T-cell (primary cell): ENCODE measurements at regions of chr13 and their contacts with region 1.

Region 1: DNA sequence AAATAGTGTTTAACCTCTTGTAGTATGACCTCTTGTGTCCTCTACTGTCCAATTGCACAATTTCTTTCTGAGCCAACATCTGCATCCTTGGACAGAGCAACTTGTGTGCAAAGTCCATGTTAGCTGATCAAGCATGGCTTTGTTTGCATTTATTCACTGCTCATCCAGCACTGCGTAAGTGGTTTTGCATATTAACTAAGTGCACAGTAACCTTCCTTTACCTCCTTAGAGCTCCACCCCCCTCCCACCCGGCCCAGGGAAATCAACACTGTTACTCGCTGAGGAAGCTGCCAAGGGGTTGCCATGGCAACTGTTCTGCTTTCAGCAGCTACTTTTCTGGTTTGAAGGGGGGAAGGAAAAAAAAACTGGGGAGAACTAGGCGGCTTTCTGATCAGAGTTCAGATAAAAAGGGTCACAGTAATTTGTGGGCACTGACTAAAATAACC is 153.5 kb upstream of the KLF12 start:
- DNase-seq: peak; percentile 47 to 97 (median 91)
- ATAC-seq: peak; percentile 65 to 74 (median 70)
- H3K4me3 ChIP-seq: peak overlapping the region in 1 of 2 donors; percentile 39
- H3K4me3 Mint-ChIP-seq: peak overlapping the region; percentile 68 to 86 (median 73)
- H3K27ac ChIP-seq: peak overlapping the region; percentile 86
- H3K27ac Mint-ChIP-seq: peak overlapping the region; percentile 86 to 98
- H3K4me1 ChIP-seq: peaks cover 29 to 37% of the 10 kb centered on the region in 2 experiments
- H3K4me1 Mint-ChIP-seq: peaks cover 59 to 76% (median 67%) of the 10 kb centered on the region in 3 donors
- H3K27me3 ChIP-seq: no peaks in the 10 kb centered on the region
- H3K27me3 Mint-ChIP-seq: no peaks in the 10 kb centered on the region

Region 2: GRCh38 chr13:73835138-73835721 is 452.5 kb before region 1 on chr13:
- CTCF ChIA-PET with region 1: interaction called, 35 to 46 read pairs
- POLR2A ChIA-PET with region 1: interaction called in 1 of 2 experiments, 6 read pairs
- DNase-seq: peak in 1 of 35 experiments; percentile 68
- ATAC-seq: peak; percentile 46 to 60 (median 57)
- H3K4me3 ChIP-seq: no peak overlapping the region
- H3K4me3 Mint-ChIP-seq: no peak overlapping the region
- H3K27ac ChIP-seq: no peak overlapping the region
- H3K27ac Mint-ChIP-seq: no peak overlapping the region
- H3K4me1 ChIP-seq: peaks cover 5 to 7% of the 10 kb centered on the region in 2 experiments
- H3K4me1 Mint-ChIP-seq: peaks cover 59 to 61% (median 59%) of the 10 kb centered on the region in 3 donors
- H3K27me3 ChIP-seq: no peaks in the 10 kb centered on the region
- H3K27me3 Mint-ChIP-seq: no peaks in the 10 kb centered on the region

Region 3: DNA sequence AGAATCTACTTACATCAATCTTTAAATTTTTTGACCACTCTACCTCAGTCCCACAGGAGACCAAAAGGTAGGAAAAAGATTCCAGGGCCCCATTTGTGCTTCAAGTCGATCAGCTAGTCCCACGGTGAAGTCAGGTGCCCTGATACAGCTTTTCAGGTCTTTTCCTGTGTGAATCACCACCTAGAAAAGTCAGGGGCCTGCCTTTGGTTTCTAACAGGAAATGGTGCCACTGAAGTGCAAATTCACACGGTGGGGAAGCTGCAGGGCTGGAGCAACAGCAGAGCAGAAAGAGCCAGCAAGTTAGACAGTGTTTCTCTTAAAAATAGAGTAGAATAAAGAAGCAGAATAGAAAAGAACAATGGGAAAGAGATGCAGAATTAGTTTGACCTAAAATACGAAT is 261.0 kb before region 1 on chr13:
- CTCF ChIA-PET with region 1: interaction called, 4 to 15 read pairs
- POLR2A ChIA-PET with region 1: interaction called in 1 of 2 experiments, 8 read pairs
- DNase-seq: peak; percentile 37 to 83 (median 68)
- ATAC-seq: peak; percentile 91 to 99 (median 98)
- H3K4me3 ChIP-seq: peak overlapping the region in 1 of 2 donors; percentile 27
- H3K4me3 Mint-ChIP-seq: peak overlapping the region; percentile 74 to 84 (median 76)
- H3K27ac ChIP-seq: peak overlapping the region; percentile 86
- H3K27ac Mint-ChIP-seq: peak overlapping the region; percentile 92 to 98
- H3K4me1 ChIP-seq: peaks cover 9 to 58% of the 10 kb centered on the region in 2 experiments
- H3K4me1 Mint-ChIP-seq: peaks cover 87 to 93% (median 88%) of the 10 kb centered on the region in 3 donors
- H3K27me3 ChIP-seq: no peaks in the 10 kb centered on the region
- H3K27me3 Mint-ChIP-seq: no peaks in the 10 kb centered on the region

Region 4: DNA sequence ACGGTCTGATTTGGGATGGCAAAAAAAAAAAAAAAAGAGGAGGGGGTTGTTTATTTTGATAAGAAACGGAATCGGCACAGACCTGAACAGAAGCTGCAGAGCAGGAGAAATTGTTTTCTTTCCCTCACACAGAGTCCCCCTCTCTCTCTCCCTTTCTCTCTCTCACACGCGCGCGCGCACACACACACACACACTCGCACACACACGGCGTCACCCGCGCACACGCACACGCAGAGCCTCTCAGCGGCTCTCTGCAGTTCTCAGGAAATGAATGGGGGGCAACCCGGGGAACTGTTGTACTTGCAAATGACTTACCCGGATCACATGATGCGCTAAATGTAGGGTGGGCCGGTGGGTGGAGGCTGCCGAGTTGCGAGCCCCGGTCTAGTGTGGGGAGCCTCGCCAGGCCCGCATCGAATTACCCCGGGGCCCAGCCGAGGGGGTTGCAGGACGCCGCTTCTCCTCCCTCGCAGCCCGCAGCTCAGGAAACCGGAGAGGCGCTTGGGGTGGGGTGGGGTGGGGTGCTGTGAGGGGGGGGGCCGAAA is 154.0 kb before region 1 on chr13:
- CTCF ChIA-PET with region 1: interaction called, 5 to 44 read pairs
- POLR2A ChIA-PET with region 1: interaction called, 11 to 48 read pairs
- DNase-seq: peak; percentile 79 to 97 (median 92)
- ATAC-seq: peak; percentile 61 to 72 (median 64)
- H3K4me3 ChIP-seq: peak overlapping the region; percentile 90 to 95
- H3K4me3 Mint-ChIP-seq: peak overlapping the region in 2 of 3 donors; percentile 97 to 99
- H3K27ac ChIP-seq: peak overlapping the region; percentile 96
- H3K27ac Mint-ChIP-seq: peak overlapping the region; percentile 99 to 100
- H3K4me1 ChIP-seq: peaks cover 25 to 29% of the 10 kb centered on the region in 2 experiments
- H3K4me1 Mint-ChIP-seq: peaks cover 34 to 40% (median 35%) of the 10 kb centered on the region in 3 donors
- H3K27me3 ChIP-seq: no peaks in the 10 kb centered on the region
- H3K27me3 Mint-ChIP-seq: no peaks in the 10 kb centered on the region

Region 5: DNA sequence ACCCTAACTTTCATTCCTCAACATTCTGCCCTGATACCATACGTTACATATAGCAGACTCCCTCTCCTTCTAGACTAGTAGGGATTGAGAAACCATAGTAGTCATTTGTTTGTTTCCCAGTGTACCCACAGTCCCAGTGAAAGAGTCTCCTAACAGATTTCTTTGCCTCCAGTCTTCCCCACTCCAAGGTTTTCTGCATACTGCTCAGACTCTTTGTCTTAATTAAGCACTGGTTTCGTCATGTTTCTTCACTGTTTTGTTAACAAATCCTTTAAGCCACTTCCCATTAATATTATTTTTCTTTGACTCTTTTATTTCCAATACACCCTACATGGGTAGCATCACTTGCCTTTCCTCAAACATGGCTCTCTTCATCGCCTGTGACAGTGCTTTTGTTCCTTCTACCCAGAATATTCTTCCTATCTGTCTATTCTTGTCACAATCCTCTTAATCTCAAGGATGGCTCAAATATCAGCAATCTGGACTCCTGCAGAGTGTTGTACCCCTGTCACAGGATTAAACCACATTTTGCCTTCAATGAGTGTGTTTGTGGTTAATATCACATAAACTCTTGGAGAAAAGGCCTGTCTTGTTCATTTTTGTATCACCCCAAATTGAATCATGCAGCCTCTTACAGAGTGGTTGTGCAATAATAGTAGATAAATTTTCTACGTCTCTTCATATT is 60.8 kb before region 1 on chr13:
- CTCF ChIA-PET with region 1: interaction called, 4 to 21 read pairs
- POLR2A ChIA-PET with region 1: interaction called in 1 of 2 experiments, 8 read pairs
- DNase-seq: no peak
- ATAC-seq: no peak
- H3K4me3 ChIP-seq: no peak overlapping the region
- H3K4me3 Mint-ChIP-seq: no peak overlapping the region
- H3K27ac ChIP-seq: no peak overlapping the region
- H3K27ac Mint-ChIP-seq: no peak overlapping the region
- H3K4me1 ChIP-seq: peaks cover 11% of the 10 kb centered on the region in 2 experiments
- H3K4me1 Mint-ChIP-seq: peaks cover 25 to 30% (median 29%) of the 10 kb centered on the region in 3 donors
- H3K27me3 ChIP-seq: no peaks in the 10 kb centered on the region
- H3K27me3 Mint-ChIP-seq: no peaks in the 10 kb centered on the region

Region 6: DNA sequence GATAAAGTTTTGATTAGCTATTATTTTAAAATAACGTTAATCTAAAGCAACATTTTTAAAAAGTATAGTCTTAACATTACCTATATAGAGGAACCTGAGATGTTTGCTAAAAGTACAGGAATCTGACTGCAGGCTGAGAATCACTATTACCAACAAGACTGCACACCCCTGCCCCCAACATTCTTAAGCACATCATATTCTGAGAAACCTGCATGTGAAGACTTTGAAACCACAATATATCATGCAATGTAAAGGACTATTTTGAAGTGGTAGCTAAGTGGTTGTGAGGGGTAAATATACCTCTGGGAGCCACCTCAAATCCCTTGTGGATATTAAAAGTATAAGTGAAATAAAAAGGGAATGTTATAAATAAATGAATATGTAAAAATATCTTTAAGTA is 34.6 kb before region 1 on chr13:
- CTCF ChIA-PET with region 1: interaction called, 11 to 12 read pairs
- POLR2A ChIA-PET with region 1: interaction called in 1 of 2 experiments, 10 read pairs
- DNase-seq: no peak
- ATAC-seq: peak in 3 of 4 experiments; percentile 40 to 48 (median 43)
- H3K4me3 ChIP-seq: no peak overlapping the region
- H3K4me3 Mint-ChIP-seq: peak overlapping the region in 1 of 3 donors; percentile 11
- H3K27ac ChIP-seq: no peak overlapping the region
- H3K27ac Mint-ChIP-seq: no peak overlapping the region
- H3K4me1 ChIP-seq: peaks cover 7 to 39% of the 10 kb centered on the region in 2 experiments
- H3K4me1 Mint-ChIP-seq: peaks cover 74 to 94% (median 85%) of the 10 kb centered on the region in 3 donors
- H3K27me3 ChIP-seq: no peaks in the 10 kb centered on the region
- H3K27me3 Mint-ChIP-seq: no peaks in the 10 kb centered on the region